ENCODE measurements at regions of chr11 and their contacts with region 1.

Region 1: DNA sequence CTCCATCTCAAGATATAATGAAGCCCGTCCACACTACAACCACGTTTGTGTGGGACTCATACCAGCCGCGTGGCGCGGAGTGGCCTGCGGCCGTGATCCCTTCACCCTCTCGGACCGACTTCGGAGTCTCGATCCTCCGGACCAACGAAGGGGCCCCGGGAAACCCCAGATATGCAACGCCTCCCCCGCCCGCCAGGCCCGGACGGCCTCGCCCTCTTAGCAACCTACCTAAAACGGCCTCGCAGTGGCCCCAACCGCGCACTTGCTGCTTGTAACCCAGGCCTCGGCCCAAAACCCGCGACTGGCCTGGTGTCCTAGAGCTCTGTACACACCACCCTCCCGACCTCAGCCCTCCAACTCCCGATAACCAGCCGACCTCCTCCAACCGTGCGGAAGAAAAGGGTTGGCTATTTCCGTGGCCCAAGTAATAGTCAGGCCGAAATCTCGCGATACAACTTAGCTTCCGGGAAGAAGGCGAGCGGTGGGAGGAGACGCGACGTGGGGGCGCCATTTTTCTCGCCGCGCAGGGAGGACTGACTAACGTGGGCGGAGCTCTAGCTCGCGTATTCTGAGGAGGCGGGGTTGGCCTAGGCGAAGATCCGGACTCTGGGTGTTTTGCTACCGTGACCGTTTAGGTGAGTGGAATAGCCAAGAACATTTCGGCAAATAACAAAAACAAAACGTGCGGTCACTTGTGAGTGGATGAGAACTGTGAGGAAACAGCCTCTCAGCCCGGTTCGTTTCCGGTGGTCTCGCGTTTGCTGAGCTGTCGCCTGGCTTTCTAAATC is at the starts of genes C11orf54 and TAF1D:
- DNase-seq: peak; percentile 97
- H3K4me3 Mint-ChIP-seq: peak within 1 kb of the TSS; percentile 100
- H3K27ac Mint-ChIP-seq: peak within 1 kb of the TSS; percentile 100
- H3K4me1 Mint-ChIP-seq: peaks cover 39% of the 10 kb centered on the region
- H3K27me3 Mint-ChIP-seq: no peaks in the 10 kb centered on the region
- total RNA-seq, gene C11orf54: 21.6 to 23.7 TPM
- total RNA-seq, gene TAF1D: 325 to 342 TPM

Region 2: GRCh38 chr11:93608364-93608763 is 132.9 kb before region 1 on chr11:
- CTCF ChIA-PET with region 1: no interaction called
- POLR2A ChIA-PET with region 1: no interaction called
- intact Hi-C with region 1: no loop called
- DNase-seq: no peak
- H3K4me3 Mint-ChIP-seq: no peak overlapping the region
- H3K27ac Mint-ChIP-seq: no peak overlapping the region
- H3K4me1 Mint-ChIP-seq: no peaks in the 10 kb centered on the region
- H3K27me3 Mint-ChIP-seq: peaks cover under 1% of the 10 kb centered on the region

Region 3: GRCh38 chr11:93662177-93662575 is 79.1 kb before region 1 on chr11:
- CTCF ChIA-PET with region 1: no interaction called
- POLR2A ChIA-PET with region 1: interaction called, 14 read pairs
- intact Hi-C with region 1: loop called (anchors 1 kb)
- DNase-seq: no peak
- H3K4me3 Mint-ChIP-seq: peak overlapping the region; percentile 94
- H3K27ac Mint-ChIP-seq: peak overlapping the region; percentile 95
- H3K4me1 Mint-ChIP-seq: peaks cover 43% of the 10 kb centered on the region
- H3K27me3 Mint-ChIP-seq: no peaks in the 10 kb centered on the region

Region 4: DNA sequence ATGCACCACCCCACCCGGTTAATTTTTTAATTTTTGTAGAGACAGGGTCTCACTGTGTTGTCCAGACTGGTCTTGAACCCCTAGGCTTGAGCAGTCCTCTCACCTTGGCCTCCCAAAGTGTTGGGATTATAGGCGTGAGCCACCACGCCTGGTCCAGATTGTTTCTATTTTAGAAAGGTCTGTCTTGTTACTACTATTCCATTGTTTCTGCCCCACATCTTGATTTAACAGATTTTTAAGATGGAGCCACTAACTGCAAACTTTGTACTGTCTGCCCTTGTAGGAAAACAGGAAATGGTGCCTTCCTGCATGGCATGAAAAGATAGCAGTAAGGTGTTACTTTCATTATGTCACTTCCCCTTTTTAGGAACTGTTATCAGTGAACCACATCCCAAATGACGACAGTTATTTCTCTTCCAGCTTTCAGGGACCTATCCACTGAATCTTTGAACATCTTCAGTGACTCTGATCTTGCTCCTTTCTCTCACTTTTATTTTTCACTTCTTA is 23.2 kb before region 1 on chr11:
- CTCF ChIA-PET with region 1: no interaction called
- POLR2A ChIA-PET with region 1: no interaction called
- intact Hi-C with region 1: no loop called
- DNase-seq: no peak
- H3K4me3 Mint-ChIP-seq: no peak overlapping the region
- H3K27ac Mint-ChIP-seq: peak overlapping the region; percentile 39
- H3K4me1 Mint-ChIP-seq: peaks cover 17% of the 10 kb centered on the region
- H3K27me3 Mint-ChIP-seq: no peaks in the 10 kb centered on the region

Region 5: GRCh38 chr11:93727985-93728791 is 13.1 kb before region 1 on chr11:
- CTCF ChIA-PET with region 1: interaction called, 3 read pairs
- POLR2A ChIA-PET with region 1: interaction called, 28 read pairs
- intact Hi-C with region 1: no loop called
- DNase-seq: no peak
- H3K4me3 Mint-ChIP-seq: no peak overlapping the region
- H3K27ac Mint-ChIP-seq: peak overlapping the region; percentile 43
- H3K4me1 Mint-ChIP-seq: peaks cover 13% of the 10 kb centered on the region
- H3K27me3 Mint-ChIP-seq: no peaks in the 10 kb centered on the region

Region 6: GRCh38 chr11:94128746-94129511 is 387.6 kb after region 1 on chr11 and contains the start of gene PANX1:
- CTCF ChIA-PET with region 1: no interaction called
- POLR2A ChIA-PET with region 1: interaction called, 15 read pairs
- intact Hi-C with region 1: loop called (anchors 1 kb)
- DNase-seq: peak; percentile 82
- H3K4me3 Mint-ChIP-seq: no peak within 1 kb of the TSS
- H3K27ac Mint-ChIP-seq: peak within 1 kb of the TSS; percentile 90
- H3K4me1 Mint-ChIP-seq: peaks cover 28% of the 10 kb centered on the region
- H3K27me3 Mint-ChIP-seq: no peaks in the 10 kb centered on the region
- total RNA-seq, gene PANX1: 11.4 to 11.7 TPM